Activated naive CD4-positive, alpha-beta T cell treated with anti-CD3 and anti-CD28 coated beads for 36 hours (primary cell): ENCODE measurements at regions of chr5 and their contacts with region 1.

Region 1: DNA sequence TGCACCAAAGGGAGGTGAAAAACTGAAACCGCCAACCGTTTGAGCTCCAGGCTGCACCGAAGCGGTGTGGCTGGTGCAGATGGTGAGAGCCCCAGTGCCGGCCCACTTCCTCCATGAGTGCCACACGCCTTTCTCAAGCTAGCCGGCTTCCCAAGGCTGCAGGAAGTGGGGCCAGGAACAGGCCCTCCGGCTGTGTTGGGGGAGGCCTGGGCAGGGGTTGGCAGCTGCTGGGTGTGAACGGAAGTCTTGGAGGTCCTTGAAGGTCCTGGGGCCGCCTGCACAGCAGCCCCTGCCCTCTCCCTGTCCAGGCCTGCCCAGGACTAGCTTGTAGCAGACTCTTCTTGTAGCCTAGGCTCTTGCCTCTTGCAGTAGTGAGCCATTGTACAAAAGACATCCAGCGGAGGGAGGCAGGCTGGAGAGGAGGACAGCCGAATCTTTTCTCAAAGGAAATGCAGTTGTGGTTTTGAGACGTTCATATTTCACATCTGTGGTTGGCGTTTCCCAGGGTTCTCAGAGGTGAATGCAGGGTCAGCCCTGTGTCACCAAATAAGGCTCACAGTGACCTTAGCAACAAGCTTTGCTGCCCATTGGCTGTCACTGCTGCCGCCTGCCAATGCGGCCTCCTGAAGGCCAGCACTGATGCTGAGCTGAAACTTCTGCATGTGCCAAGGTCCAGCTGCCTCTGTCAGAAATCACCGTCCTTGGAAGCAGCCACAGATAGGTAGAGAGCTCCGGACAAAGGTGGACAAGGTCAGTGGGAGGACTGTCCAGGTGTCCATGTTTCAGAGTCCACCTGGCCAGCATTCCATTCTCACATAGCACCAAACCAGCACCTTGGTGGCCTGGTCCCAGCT is 23.9 kb downstream of the IRF1 start:
- DNase-seq: peak; percentile 72
- H3K4me3 Mint-ChIP-seq: peak overlapping the region; percentile 49
- H3K27ac Mint-ChIP-seq: peak overlapping the region; percentile 16
- H3K4me1 Mint-ChIP-seq: peaks cover 74% of the 10 kb centered on the region
- H3K27me3 Mint-ChIP-seq: no peaks in the 10 kb centered on the region

Region 2: DNA sequence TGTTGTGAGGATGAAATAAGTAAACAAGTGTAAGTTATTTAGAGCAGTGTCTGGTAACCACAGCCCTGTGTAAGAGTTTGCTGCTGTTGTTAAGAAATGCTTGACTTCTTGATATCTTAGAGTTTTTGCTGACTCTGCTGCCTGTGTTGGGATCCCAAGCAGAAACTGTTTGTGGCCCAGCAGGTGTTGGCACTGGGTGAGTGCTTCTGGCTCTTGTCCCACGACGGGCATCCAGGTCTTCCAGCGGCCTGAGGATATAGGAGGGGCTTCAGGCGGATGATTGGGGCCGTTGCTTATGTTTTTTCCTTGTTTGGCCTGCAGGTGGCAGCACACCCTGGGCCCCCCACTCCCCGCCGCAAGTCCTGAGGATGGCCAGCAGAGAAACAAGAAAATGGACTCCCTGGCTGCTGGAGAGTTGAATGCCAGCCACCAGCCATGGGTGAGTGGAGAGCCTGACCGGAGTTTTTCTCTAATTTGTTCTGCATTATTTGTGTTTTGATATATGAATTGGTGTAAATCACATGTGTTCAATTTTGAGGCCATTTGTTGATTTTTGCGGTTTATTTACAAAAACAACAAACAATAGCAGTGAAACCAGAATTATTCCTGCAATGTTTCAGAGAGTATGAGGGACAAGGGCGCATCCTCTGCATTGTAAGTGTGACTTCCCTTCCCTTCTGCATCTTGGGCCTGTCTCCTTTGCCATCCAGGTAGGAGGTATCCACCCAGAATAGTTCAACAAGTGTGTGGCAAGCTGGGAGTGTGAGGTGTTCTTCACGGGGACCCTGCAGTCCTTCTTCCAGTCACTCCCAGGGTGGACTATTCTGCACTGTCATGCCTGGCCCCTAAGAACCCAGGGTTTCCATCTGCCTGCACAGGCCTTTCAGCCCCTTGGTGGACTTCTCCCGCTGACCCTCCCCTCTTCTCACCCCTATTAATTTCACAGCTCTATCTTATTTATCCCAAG is 46.9 kb before region 1 on chr5:
- CTCF ChIA-PET with region 1: interaction called, 26 read pairs
- intact Hi-C with region 1: loop called (anchors 1 kb)
- DNase-seq: peak; percentile 67
- H3K4me3 Mint-ChIP-seq: peak overlapping the region; percentile 14
- H3K27ac Mint-ChIP-seq: peak overlapping the region; percentile 86
- H3K4me1 Mint-ChIP-seq: peaks cover 87% of the 10 kb centered on the region
- H3K27me3 Mint-ChIP-seq: no peaks in the 10 kb centered on the region

Region 3: DNA sequence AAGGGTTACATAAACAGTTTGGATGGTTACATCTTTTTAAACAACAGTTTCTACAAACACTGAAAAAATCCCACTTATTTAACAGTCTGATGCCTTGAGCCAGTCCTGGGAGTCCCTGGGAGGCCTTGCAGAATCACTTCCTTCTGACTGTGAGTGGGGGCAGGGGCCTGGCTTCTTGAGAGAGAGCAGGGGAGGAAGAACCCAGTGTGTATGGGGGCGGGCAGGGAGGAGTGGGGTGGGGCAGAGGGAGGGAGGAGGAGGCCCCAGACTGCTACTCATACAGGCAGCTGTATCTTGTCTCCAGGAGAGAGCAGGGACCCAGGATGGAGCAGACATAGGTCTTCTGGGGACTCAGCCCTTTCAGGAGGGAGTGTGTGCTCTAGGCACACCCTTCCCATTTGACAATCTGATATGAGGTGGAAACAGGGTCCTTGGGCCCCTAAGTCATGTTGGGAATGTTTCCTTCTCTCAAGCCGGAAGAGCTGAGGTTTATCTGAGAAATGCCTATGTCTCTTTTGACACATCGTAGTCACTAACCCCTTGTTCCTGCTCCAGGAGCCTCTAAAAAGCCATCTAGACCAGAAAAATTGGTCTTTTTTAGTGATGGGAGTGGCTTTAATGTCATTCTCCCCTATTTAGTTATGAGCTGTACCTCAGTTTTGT is 28.9 kb before region 1 on chr5:
- CTCF ChIA-PET with region 1: interaction called, 3 read pairs
- intact Hi-C with region 1: loop called (anchors 1 kb)
- DNase-seq: peak; percentile 83
- H3K4me3 Mint-ChIP-seq: peak overlapping the region; percentile 46
- H3K27ac Mint-ChIP-seq: peak overlapping the region; percentile 81
- H3K4me1 Mint-ChIP-seq: peaks cover 83% of the 10 kb centered on the region
- H3K27me3 Mint-ChIP-seq: no peaks in the 10 kb centered on the region

Region 4: GRCh38 chr5:132479111-132479951 is 12.7 kb after region 1 on chr5:
- CTCF ChIA-PET with region 1: interaction called, 12 read pairs
- intact Hi-C with region 1: no loop called
- DNase-seq: no peak
- H3K4me3 Mint-ChIP-seq: no peak overlapping the region
- H3K27ac Mint-ChIP-seq: peak overlapping the region; percentile 36
- H3K4me1 Mint-ChIP-seq: peaks cover 53% of the 10 kb centered on the region
- H3K27me3 Mint-ChIP-seq: no peaks in the 10 kb centered on the region

Region 5: DNA sequence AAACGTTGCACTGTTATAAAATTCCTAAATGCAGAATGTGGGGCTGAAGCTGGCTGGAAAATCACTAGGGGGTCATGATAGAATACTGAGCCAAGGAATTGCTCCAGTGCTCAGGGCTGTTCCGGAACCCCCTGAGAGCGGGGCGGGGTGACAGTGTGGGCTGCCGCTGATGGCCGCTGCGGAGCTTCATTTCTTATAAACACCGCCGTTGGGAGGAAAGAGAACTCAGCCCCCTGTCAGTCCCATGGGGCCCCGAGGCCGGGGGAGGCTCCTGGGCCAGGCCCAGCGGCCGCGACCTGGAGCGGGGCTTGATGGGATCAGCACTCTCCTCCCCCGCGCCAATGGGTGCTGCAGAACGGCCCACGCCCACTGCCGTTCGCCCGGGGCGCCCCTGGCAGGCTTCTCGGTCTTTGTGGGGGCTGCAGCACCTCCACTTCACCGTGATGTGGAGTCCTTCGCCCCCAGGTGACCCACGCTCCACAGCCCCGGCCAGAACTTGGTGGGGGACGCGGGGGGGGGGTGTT is 29.1 kb after region 1 on chr5:
- CTCF ChIA-PET with region 1: interaction called, 11 read pairs
- intact Hi-C with region 1: loop called (anchors 1 kb)
- DNase-seq: peak; percentile 79
- H3K4me3 Mint-ChIP-seq: peak overlapping the region; percentile 84
- H3K27ac Mint-ChIP-seq: peak overlapping the region; percentile 91
- H3K4me1 Mint-ChIP-seq: peaks cover 56% of the 10 kb centered on the region
- H3K27me3 Mint-ChIP-seq: no peaks in the 10 kb centered on the region

Region 6: DNA sequence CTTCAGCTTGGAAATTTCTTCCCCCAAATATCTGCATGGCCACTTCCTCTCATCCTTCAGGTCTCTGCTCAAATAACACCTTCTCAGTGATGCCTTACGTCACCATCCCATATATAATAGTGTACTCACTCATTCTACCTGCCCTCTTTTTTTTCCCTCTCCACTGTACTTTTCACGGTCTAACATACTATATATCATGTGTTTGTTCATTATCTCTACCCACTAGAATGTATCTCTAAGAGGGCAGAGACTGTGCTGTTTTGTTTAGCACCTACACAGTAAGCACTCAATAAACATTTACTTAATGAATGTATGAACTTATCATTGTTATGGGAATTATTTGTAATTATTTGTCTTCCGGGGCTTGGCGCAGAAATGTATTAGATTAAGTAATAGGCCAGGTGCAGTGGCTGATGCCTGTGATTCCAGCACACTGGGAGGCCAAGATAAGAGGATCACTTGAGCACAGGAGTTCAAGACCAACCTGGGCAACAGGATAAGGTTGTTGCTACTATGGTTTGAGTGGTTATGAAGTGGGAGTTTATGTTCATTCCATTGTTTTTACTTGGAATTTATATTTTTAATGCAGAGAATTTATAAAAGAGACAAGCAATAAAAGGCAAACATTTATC is 185.3 kb after region 1 on chr5:
- CTCF ChIA-PET with region 1: no interaction called
- intact Hi-C with region 1: no loop called
- DNase-seq: no peak
- H3K4me3 Mint-ChIP-seq: no peak overlapping the region
- H3K27ac Mint-ChIP-seq: no peak overlapping the region
- H3K4me1 Mint-ChIP-seq: peaks cover 6% of the 10 kb centered on the region
- H3K27me3 Mint-ChIP-seq: peaks cover 16% of the 10 kb centered on the region